ENCODE measurements at regions of chr20 and their contacts with region 1.

Region 1: GRCh38 chr20:4069751-4070150 is 54.4 kb upstream of the RNF24 start:
- DNase-seq: no peak
- H3K4me3 ChIP-seq: no peak overlapping the region
- CTCF ChIP-seq: no peak

Region 2: GRCh38 chr20:3887876-3888620 is 181.7 kb before region 1 on chr20:
- CTCF ChIA-PET with region 1: interaction called, 17 read pairs
- POLR2A ChIA-PET with region 1: interaction called, 3 read pairs
- DNase-seq: no peak
- H3K4me3 ChIP-seq: peak overlapping the region; percentile 98
- CTCF ChIP-seq: no peak

Region 3: GRCh38 chr20:3932681-3933080 is 137.1 kb before region 1 on chr20:
- CTCF ChIA-PET with region 1: interaction called, 12 read pairs
- POLR2A ChIA-PET with region 1: interaction called, 3 read pairs
- DNase-seq: no peak
- H3K4me3 ChIP-seq: no peak overlapping the region
- CTCF ChIP-seq: no peak

Region 4: GRCh38 chr20:4014031-4014474 is 55.7 kb before region 1 on chr20:
- CTCF ChIA-PET with region 1: interaction called, 31 read pairs
- POLR2A ChIA-PET with region 1: no interaction called
- DNase-seq: peak; percentile 28
- H3K4me3 ChIP-seq: peak overlapping the region; percentile 85
- CTCF ChIP-seq: peak; percentile 67

Region 5: GRCh38 chr20:4041748-4042411 is 27.9 kb before region 1 on chr20:
- CTCF ChIA-PET with region 1: interaction called, 12 read pairs
- POLR2A ChIA-PET with region 1: interaction called, 5 read pairs
- DNase-seq: no peak
- H3K4me3 ChIP-seq: no peak overlapping the region
- CTCF ChIP-seq: no peak

Region 6: DNA sequence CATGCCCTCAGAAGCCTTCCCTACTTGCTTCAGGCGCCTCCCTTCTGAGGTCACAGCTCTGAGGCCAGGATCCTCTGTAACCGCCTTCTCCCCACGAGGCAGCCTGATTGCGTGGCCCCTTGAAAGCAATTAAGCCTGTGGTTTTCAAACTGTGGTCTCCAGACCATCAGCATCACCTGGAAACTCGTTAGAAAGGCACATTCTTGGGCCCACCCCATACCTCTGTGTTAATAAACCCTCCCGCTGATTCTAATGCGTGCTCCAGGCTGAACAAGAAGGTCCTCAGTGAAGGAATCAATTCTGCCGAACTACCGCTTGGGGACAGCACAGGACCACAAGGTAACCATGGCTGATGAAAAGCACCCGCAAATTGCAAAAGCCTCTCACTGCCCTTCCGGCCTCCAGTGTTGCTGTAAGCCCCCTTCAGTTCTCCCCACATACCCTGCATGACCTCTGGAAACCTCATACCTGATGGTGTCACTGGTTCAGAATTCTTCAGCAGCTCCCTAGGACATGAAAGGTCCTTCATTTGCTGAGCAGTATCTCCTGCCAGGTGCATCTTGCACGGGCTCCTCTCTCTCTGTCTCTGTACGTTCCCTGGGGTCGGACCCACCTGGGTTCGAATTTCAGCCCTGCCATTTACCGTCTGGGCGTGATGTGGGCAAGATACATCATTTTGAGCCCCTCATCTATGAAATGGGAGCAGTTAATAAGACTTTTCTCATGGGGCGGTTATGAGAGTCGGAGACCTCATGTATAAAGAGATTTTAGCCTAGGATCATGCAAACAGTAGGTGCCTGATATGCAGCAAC is 39.0 kb after region 1 on chr20:
- CTCF ChIA-PET with region 1: no interaction called
- POLR2A ChIA-PET with region 1: no interaction called
- DNase-seq: no peak
- H3K4me3 ChIP-seq: no peak overlapping the region
- CTCF ChIP-seq: peak; percentile 96

Region 7: GRCh38 chr20:4147319-4147718 is 77.6 kb after region 1 on chr20:
- CTCF ChIA-PET with region 1: no interaction called
- POLR2A ChIA-PET with region 1: no interaction called
- DNase-seq: no peak
- H3K4me3 ChIP-seq: no peak overlapping the region
- CTCF ChIP-seq: no peak

Measured in AG04449 (cell line).